ENCODE measurements at regions of chr9 and their contacts with region 1.

Region 1: DNA sequence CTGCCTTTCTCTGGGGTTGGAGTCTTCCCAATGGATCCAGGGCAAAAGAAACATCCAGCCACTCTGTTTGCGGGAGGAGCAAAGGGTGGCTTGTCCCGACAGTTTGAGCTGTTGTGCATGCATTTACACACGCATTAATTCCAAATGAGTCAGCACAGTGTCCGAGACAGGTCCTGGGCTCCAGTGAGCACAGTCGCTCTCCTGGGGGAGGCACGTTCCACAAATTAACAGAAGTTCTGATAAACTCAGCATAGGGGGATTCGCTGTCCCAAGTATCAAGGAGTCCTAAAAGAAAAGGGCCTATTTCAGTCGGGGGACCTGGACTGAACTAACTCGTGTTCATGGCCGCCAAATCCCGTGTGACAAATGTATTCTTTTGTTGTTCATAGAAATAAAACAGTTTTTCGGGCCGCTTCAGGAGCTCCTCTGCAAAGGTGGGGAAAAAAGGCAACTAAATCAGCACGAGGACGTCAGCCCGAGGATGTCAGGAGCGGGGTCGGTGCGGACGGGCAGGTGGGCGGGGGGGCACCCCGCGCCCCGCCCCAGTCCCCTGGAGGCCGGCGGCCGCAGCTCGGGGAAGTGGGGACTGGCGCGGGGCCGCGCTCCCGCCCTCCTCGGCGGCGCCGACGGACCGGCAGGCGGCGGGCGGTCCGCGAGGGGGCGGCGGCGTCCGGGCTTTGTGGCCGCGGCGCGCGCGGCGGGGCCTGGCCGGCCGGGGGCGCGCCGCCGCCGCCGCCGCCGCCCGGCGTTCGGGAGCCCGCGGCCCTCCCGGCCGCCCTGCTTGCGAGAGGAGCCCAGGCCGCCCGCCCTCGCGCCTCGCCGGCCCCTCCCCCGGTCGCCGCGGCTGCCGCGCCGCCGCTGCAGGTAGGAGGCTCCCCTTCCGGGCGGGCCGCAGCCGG is at the start of gene MSANTD3:
- DNase-seq: peak; percentile 76
- H3K4me3 ChIP-seq: peak within 1 kb of the TSS; percentile 63 to 74 (median 69)
- H3K27ac ChIP-seq: peak within 1 kb of the TSS; percentile 95
- H3K4me1 ChIP-seq: peaks cover 37% of the 10 kb centered on the region
- H3K27me3 ChIP-seq: no peaks in the 10 kb centered on the region
- CTCF ChIP-seq: no peak
- total RNA-seq, gene MSANTD3: 44.3 to 74.0 TPM

Region 2: GRCh38 chr9:100352727-100353505 is 73.9 kb before region 1 on chr9 and contains the start of gene TEX10:
- CTCF ChIA-PET with region 1: interaction called, 7 read pairs
- dilution Hi-C with region 1: no loop called
- in situ Hi-C with region 1: loop called in 1 of 2 experiments (anchors 5 kb)
- intact Hi-C with region 1: loop called (anchors 1 kb)
- DNase-seq: peak; percentile 73
- H3K4me3 ChIP-seq: peak within 1 kb of the TSS; percentile 54 to 86 (median 78)
- H3K27ac ChIP-seq: peak within 1 kb of the TSS; percentile 74
- H3K4me1 ChIP-seq: peaks cover 13% of the 10 kb centered on the region
- H3K27me3 ChIP-seq: no peaks in the 10 kb centered on the region
- CTCF ChIP-seq: no peak
- total RNA-seq, gene TEX10: 30.3 to 36.8 TPM

Region 3: GRCh38 chr9:100411472-100412283 is 15.1 kb before region 1 on chr9:
- CTCF ChIA-PET with region 1: no interaction called
- dilution Hi-C with region 1: no loop called
- in situ Hi-C with region 1: no loop called
- intact Hi-C with region 1: loop called (anchors 1 kb)
- DNase-seq: peak; percentile 77
- H3K4me3 ChIP-seq: peak overlapping the region; percentile 32 to 54 (median 40)
- H3K27ac ChIP-seq: no peak overlapping the region
- H3K4me1 ChIP-seq: peaks cover 9% of the 10 kb centered on the region
- H3K27me3 ChIP-seq: no peaks in the 10 kb centered on the region
- CTCF ChIP-seq: no peak

Region 4: GRCh38 chr9:100437860-100438805 is 11.4 kb after region 1 on chr9:
- CTCF ChIA-PET with region 1: interaction called, 6 read pairs
- dilution Hi-C with region 1: no loop called
- in situ Hi-C with region 1: no loop called
- intact Hi-C with region 1: loop called (anchors 1 kb)
- DNase-seq: peak; percentile 62
- H3K4me3 ChIP-seq: no peak overlapping the region
- H3K27ac ChIP-seq: no peak overlapping the region
- H3K4me1 ChIP-seq: no peaks in the 10 kb centered on the region
- H3K27me3 ChIP-seq: no peaks in the 10 kb centered on the region
- CTCF ChIP-seq: peak; percentile 94 to 98

Region 5: GRCh38 chr9:100919506-100919905 is 492.7 kb after region 1 on chr9:
- CTCF ChIA-PET with region 1: no interaction called
- dilution Hi-C with region 1: no loop called
- in situ Hi-C with region 1: no loop called
- intact Hi-C with region 1: no loop called
- DNase-seq: no peak
- H3K4me3 ChIP-seq: no peak overlapping the region
- H3K27ac ChIP-seq: no peak overlapping the region
- H3K4me1 ChIP-seq: no peaks in the 10 kb centered on the region
- H3K27me3 ChIP-seq: no peaks in the 10 kb centered on the region
- CTCF ChIP-seq: no peak

Region 6: GRCh38 chr9:101387871-101388506 is 961.2 kb after region 1 on chr9:
- CTCF ChIA-PET with region 1: interaction called, 10 read pairs
- dilution Hi-C with region 1: no loop called
- in situ Hi-C with region 1: no loop called
- intact Hi-C with region 1: no loop called
- DNase-seq: peak; percentile 32
- H3K4me3 ChIP-seq: no peak overlapping the region
- H3K27ac ChIP-seq: no peak overlapping the region
- H3K4me1 ChIP-seq: no peaks in the 10 kb centered on the region
- H3K27me3 ChIP-seq: no peaks in the 10 kb centered on the region
- CTCF ChIP-seq: peak; percentile 55 to 72

Measured in mammary epithelial cell (primary cell).